Activated naive CD8-positive, alpha-beta T cell treated with anti-CD3 and anti-CD28 coated beads, Interleukin-2, amount 10 ng/mL, durations not matched to agents 7 days and 5 days (primary cell): ENCODE measurements at regions of chr16 and their contacts with region 1.

Region 1: DNA sequence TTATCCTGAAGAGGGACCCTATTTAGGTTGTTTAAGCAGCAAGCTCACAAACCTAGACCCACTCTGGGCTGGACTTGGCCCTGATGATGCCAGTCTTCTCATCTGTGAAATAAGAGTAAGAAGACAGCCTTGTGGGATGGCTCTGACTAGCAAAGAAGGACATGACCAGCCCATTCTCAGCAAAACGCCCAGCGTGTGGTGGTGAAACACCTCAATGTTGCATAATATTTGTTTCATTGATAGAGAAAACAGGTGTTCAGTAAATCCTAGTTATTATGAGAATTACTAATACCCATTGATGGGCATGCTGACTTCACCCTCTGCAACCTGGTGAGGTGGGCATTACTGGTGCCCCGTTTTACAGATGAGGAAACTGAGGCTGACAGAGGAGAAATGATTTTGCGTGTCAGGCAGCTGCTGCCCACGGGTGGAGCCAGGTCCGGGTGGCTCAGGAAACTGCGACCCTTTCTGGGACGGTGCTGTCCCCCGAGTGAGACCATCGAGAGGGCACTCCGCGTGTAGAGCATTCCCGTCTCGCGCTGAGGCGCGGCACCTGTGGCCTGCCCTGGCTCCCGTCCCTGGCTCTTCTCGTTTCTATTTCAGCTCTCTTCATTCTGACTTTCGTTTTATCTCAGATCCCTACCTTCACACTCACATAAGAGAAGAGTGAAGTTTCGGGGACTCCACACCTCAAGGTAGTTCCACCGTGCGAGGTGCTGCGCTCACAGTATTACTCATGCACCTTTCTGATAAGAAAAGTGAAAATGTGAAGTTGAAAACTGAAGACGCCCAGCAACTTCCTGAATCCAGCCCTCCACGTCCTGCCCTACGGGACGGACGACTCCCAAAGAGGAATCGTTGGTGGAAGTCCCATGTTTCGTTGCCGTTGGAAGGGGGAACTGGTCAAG is 48.5 kb downstream of the IRF8 start:
- DNase-seq: no peak
- ATAC-seq: peak; percentile 84
- H3K4me3 Mint-ChIP-seq: peak overlapping the region; percentile 69
- H3K27ac Mint-ChIP-seq: peak overlapping the region; percentile 71
- H3K4me1 Mint-ChIP-seq: peaks cover 37% of the 10 kb centered on the region
- H3K27me3 Mint-ChIP-seq: peaks cover 3% of the 10 kb centered on the region

Region 2: GRCh38 chr16:85963753-85964285 is 16.3 kb after region 1 on chr16:
- POLR2A ChIA-PET with region 1: no interaction called
- DNase-seq: no peak
- ATAC-seq: no peak
- H3K4me3 Mint-ChIP-seq: no peak overlapping the region
- H3K27ac Mint-ChIP-seq: no peak overlapping the region
- H3K4me1 Mint-ChIP-seq: no peaks in the 10 kb centered on the region
- H3K27me3 Mint-ChIP-seq: peaks cover 2% of the 10 kb centered on the region

Region 3: GRCh38 chr16:85981826-85982562 is 34.5 kb after region 1 on chr16:
- POLR2A ChIA-PET with region 1: interaction called, 10 read pairs
- DNase-seq: no peak
- ATAC-seq: no peak
- H3K4me3 Mint-ChIP-seq: no peak overlapping the region
- H3K27ac Mint-ChIP-seq: no peak overlapping the region
- H3K4me1 Mint-ChIP-seq: peaks cover 16% of the 10 kb centered on the region
- H3K27me3 Mint-ChIP-seq: no peaks in the 10 kb centered on the region